PC-3 (cell line): ENCODE measurements at regions of chr4 and their contacts with region 1.

Region 1: GRCh38 chr4:173013232-173013930 is 155.2 kb upstream of the GALNT7 start:
- DNase-seq: peak; percentile 57
- ATAC-seq: peak; percentile 62
- H3K4me3 ChIP-seq: no peak overlapping the region
- H3K27ac ChIP-seq: no peak overlapping the region
- H3K4me1 ChIP-seq: peaks cover 11% of the 10 kb centered on the region
- H3K27me3 ChIP-seq: no peaks in the 10 kb centered on the region
- CTCF ChIP-seq: peak; percentile 66

Region 2: GRCh38 chr4:172892300-172892699 is 121.1 kb before region 1 on chr4:
- CTCF ChIA-PET with region 1: interaction called, 7 read pairs
- POLR2A ChIA-PET with region 1: no interaction called
- intact Hi-C with region 1: loop called (anchors 10 kb)
- DNase-seq: peak; percentile 52
- ATAC-seq: no peak
- H3K4me3 ChIP-seq: no peak overlapping the region
- H3K27ac ChIP-seq: no peak overlapping the region
- H3K4me1 ChIP-seq: no peaks in the 10 kb centered on the region
- H3K27me3 ChIP-seq: no peaks in the 10 kb centered on the region
- CTCF ChIP-seq: peak; percentile 70

Region 3: DNA sequence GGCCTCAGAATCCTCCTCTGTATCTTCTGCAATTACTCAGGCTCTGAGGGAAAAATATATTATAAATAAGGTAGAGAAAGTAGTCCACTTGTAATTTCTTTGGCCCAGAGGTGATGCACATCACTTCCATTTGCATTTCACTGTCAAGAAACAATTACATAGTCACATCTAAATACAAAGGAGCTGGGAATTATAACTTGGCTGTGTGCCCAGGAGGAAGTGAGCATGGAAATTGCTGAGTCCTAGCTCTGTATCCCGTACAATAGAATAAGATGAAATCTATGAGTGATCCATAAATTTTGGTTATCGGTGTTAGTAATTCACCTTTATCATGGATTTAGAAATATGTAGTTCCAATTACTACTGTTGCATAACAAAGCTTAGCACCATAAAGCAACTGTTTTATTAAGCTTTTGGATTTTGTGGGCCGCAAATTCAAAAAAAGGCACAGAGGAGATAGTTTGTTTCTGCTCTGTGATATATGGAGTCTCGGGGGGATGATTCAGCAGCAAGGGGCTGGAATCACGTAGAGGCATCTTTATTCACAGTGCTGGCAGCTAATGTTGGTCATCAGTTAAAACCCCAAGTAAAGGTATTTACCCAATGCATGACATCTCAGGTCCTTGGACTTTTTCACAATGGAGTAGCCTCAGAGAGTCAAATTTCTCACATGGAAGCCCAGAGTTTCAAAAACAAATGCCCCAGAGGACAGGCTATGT is 86.1 kb before region 1 on chr4:
- CTCF ChIA-PET with region 1: no interaction called
- POLR2A ChIA-PET with region 1: no interaction called
- intact Hi-C with region 1: no loop called
- DNase-seq: no peak
- ATAC-seq: no peak
- H3K4me3 ChIP-seq: no peak overlapping the region
- H3K27ac ChIP-seq: no peak overlapping the region
- H3K4me1 ChIP-seq: no peaks in the 10 kb centered on the region
- H3K27me3 ChIP-seq: 0 out of 2 replicates have a peak, but pooled peaks cover 2% of the 10 kb centered on the region
- CTCF ChIP-seq: no peak

Region 4: DNA sequence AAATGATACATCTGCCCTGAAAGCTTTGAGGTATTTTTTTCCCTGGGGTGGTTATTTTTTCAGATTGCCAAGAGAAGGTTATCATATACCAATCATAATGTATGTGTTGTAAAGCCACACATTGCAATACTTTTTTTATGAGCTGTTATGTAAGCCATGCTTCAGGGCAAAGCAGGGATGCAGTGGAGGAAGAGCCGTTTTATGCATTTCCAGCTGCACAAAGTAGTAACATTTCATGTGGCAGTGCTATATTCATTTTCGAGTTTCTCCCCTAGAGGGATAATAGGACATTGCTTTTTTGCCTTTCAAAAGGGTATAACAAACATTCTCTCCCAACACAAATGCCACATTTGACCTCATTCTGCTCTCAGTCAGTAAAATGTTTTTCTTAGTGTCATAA is 223.8 kb after region 1 on chr4:
- CTCF ChIA-PET with region 1: interaction called, 15 read pairs
- POLR2A ChIA-PET with region 1: no interaction called
- intact Hi-C with region 1: no loop called
- DNase-seq: peak; percentile 48
- ATAC-seq: peak; percentile 35
- H3K4me3 ChIP-seq: no peak overlapping the region
- H3K27ac ChIP-seq: no peak overlapping the region
- H3K4me1 ChIP-seq: peaks cover 13% of the 10 kb centered on the region; the same call in 1 of the 2 replicates
- H3K27me3 ChIP-seq: no peaks in the 10 kb centered on the region
- CTCF ChIP-seq: no peak

Region 5: DNA sequence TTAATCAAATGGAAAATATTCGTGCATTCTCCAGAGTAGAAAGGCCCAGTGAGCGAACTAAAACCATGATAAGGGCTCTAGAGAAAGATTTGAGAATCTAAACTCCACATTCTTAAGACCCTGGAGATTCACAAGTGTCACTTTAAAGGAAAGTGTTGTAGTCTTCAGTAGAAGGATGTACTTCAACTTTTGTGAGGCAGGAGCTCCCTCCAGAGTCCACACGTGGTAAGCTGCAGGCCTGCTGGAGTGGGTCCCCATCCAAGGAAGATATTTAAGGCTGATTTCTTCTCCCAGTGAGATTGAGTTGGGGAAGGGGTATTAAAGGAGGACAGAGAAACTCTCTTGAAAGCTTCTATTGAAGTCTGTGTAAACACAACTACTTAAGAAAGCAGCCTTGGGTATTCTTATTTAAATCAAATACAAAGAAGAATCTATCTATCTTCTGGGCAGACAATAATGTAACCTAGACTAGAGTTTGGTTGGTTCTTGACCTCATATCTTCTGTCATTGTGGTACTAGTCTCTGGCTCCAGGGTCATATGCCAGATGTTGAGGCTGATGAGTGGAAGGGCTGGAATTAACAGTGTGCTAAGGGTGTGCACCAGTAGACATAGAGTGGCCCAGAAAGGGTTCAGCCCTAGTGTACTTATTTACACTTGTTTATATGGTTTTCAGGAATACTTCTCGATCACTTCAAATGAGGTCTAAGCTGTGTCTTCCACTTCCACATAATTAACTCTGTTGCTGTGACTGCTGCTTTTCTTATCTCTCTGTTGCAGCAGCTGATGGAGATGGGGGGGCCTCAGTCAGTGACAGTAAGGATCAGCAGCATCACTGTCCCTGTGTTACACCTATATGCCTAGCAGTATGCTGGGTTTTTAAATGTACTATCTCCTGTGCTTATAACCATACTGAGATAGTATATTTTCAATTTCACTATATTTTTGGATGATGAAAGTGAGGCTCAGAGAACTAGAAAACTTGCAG is 244.6 kb after region 1 on chr4:
- CTCF ChIA-PET with region 1: interaction called, 9 read pairs
- POLR2A ChIA-PET with region 1: no interaction called
- intact Hi-C with region 1: loop called (anchors 1 kb)
- DNase-seq: peak; percentile 73
- ATAC-seq: peak; percentile 95
- H3K4me3 ChIP-seq: no peak overlapping the region
- H3K27ac ChIP-seq: no peak overlapping the region
- H3K4me1 ChIP-seq: peaks cover under 1% of the 10 kb centered on the region; the same call in 1 of the 2 replicates
- H3K27me3 ChIP-seq: no peaks in the 10 kb centered on the region
- CTCF ChIP-seq: peak; percentile 89

Region 6: GRCh38 chr4:173420324-173420752 is 407.0 kb after region 1 on chr4:
- CTCF ChIA-PET with region 1: no interaction called
- POLR2A ChIA-PET with region 1: no interaction called
- intact Hi-C with region 1: loop called (anchors 2 kb)
- DNase-seq: peak; percentile 42
- ATAC-seq: no peak
- H3K4me3 ChIP-seq: no peak overlapping the region
- H3K27ac ChIP-seq: no peak overlapping the region
- H3K4me1 ChIP-seq: peaks cover 35% of the 10 kb centered on the region
- H3K27me3 ChIP-seq: no peaks in the 10 kb centered on the region
- CTCF ChIP-seq: peak; percentile 64